HepG2 (cell line): ENCODE measurements at regions of chrX and their contacts with region 1.

Region 1: DNA sequence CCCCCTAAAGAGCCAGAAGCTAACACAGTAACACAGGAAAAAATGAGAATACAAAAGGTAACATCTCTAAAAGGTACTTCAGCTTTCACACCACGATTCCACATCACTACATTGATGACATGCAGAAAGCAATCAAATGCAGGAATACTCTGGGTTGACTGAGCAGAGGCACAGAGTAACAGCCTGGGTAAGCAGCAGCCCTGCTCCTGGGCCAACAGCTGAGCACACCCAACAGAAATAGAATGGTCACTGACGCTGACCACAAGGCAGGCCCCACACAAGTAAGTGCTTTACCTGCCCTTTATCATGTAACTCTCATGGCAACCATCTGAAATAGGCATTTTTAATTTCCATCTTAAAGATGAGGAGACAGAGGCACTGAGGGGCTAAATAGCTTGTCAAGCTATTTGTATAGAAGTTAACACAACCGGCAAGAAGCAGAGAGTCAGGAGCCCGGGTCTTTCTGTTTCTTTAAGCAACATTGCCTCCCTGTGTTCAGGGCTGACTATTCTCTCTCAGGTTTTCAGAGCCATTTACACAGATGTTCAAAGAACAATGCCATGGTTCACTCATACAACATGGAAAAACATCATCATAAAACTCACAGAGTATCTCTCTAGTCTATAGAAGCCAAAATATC is 168.9 kb downstream of the ZNF674 start:
- DNase-seq: peak; percentile 57
- ATAC-seq: peak; percentile 80
- H3K4me3 ChIP-seq: no peak overlapping the region
- H3K27ac ChIP-seq: no peak overlapping the region
- H3K4me1 ChIP-seq: peaks cover 19% of the 10 kb centered on the region
- H3K27me3 ChIP-seq: no peaks in the 10 kb centered on the region
- CTCF ChIP-seq: peak; percentile 67
- EP300 ChIP-seq: no peak
- POLR2A ChIP-seq: no peak
- RAD21 ChIP-seq: peak; percentile 66

Region 2: GRCh38 chrX:46317163-46317562 is 59.2 kb before region 1 on chrX:
- CTCF ChIA-PET with region 1: no interaction called
- POLR2A ChIA-PET with region 1: interaction called, 10 read pairs
- in situ Hi-C with region 1: no loop called
- intact Hi-C with region 1: loop called (anchors 5 kb)
- DNase-seq: no peak
- ATAC-seq: no peak
- H3K4me3 ChIP-seq: no peak overlapping the region
- H3K27ac ChIP-seq: peak overlapping the region; percentile 22
- H3K4me1 ChIP-seq: peaks cover 76% of the 10 kb centered on the region
- H3K27me3 ChIP-seq: no peaks in the 10 kb centered on the region
- CTCF ChIP-seq: no peak
- EP300 ChIP-seq: no peak
- POLR2A ChIP-seq: no peak
- RAD21 ChIP-seq: no peak

Region 3: GRCh38 chrX:46325312-46325877 is 51.0 kb before region 1 on chrX:
- CTCF ChIA-PET with region 1: no interaction called
- POLR2A ChIA-PET with region 1: interaction called, 10 read pairs
- in situ Hi-C with region 1: no loop called
- intact Hi-C with region 1: loop called (anchors 5 kb)
- DNase-seq: peak; percentile 41
- ATAC-seq: no peak
- H3K4me3 ChIP-seq: peak overlapping the region in 1 of 3 experiments; percentile 68; a peak in 1 of 6 replicates
- H3K27ac ChIP-seq: peak overlapping the region; percentile 100
- H3K4me1 ChIP-seq: peaks cover 83% of the 10 kb centered on the region
- H3K27me3 ChIP-seq: no peaks in the 10 kb centered on the region
- CTCF ChIP-seq: no peak
- EP300 ChIP-seq: no peak
- POLR2A ChIP-seq: no peak
- RAD21 ChIP-seq: no peak

Region 4: DNA sequence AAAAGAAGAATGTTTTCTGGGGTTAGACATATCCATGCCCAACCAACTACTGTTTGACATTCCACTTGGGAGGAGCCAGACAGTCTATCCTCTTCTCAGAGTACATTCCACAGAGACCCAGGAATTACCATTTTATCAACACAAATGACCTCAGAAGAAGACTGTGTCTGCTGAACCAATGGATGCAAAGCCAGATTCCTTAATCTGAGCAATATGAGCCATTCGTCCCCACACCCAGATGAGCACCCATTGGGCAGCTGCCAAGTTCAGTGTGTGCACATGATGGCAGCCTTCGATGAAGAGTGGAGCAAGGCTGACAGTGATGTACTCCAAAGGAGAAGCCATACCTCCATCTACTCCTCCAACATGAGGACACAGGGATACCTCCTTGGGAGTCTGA is 57.5 kb after region 1 on chrX:
- CTCF ChIA-PET with region 1: no interaction called
- POLR2A ChIA-PET with region 1: no interaction called
- in situ Hi-C with region 1: no loop called
- intact Hi-C with region 1: no loop called
- DNase-seq: no peak
- ATAC-seq: no peak
- H3K4me3 ChIP-seq: no peak overlapping the region
- H3K27ac ChIP-seq: no peak overlapping the region
- H3K4me1 ChIP-seq: no peaks in the 10 kb centered on the region
- H3K27me3 ChIP-seq: no peaks in the 10 kb centered on the region; a peak in 1 of 5 replicates
- CTCF ChIP-seq: no peak
- EP300 ChIP-seq: no peak
- POLR2A ChIP-seq: no peak
- RAD21 ChIP-seq: no peak